ENCODE measurements at regions of chr17 and their contacts with region 1.

Region 1: DNA sequence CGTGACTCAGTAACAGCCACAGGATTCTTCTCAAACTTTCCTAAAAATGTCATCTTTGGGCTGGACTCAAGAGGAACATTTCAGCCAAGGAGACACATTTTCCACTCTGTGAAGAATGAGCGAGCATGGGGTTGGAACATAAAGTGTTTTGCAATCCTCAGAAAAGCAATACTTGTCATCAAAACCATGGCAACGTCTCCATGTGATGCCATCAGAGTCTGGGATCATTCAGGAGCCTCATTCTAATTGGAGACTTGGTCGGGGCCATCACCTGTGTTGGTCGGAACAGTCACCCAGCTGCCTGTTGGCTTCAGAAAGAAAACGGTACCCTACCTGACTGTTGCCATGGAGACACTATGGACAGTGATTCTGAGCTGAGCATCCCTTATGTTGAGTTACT is 25.5 kb downstream of the MYOCD start:
- DNase-seq: no peak
- H3K4me3 ChIP-seq: no peak overlapping the region
- H3K27ac ChIP-seq: peak overlapping the region in 1 of 2 donors; percentile 66
- H3K4me1 ChIP-seq: no peaks in the 10 kb centered on the region
- H3K27me3 ChIP-seq: no peaks in the 10 kb centered on the region
- CTCF ChIP-seq: no peak
- POLR2A ChIP-seq: no peak

Region 2: GRCh38 chr17:12463102-12463501 is 228.1 kb before region 1 on chr17:
- intact Hi-C with region 1: loop called (anchors 5 kb)
- DNase-seq: no peak
- H3K4me3 ChIP-seq: no peak overlapping the region
- H3K27ac ChIP-seq: no peak overlapping the region
- H3K4me1 ChIP-seq: no peaks in the 10 kb centered on the region
- H3K27me3 ChIP-seq: no peaks in the 10 kb centered on the region
- CTCF ChIP-seq: no peak
- POLR2A ChIP-seq: no peak

Region 3: DNA sequence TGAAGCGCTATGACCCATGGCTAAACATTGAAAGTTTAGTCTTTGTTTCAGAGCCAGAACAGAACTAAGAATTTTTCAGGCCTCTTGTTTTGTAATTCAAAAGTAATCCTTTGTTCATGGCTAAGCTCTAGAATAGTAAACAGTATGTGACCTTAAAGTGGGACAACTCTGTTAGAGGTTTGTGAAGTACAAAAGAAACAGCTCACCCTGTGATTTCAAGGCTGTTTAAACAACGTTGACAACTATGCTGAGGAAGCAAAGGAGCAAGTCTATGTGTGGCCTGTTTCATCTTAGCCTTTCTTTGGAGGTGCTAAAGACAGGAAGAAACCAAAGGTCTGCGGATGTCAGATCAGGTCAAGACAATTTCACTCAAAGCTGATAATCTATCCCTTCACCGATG is 14.9 kb after region 1 on chr17:
- intact Hi-C with region 1: loop called (anchors 1 kb)
- DNase-seq: no peak
- H3K4me3 ChIP-seq: no peak overlapping the region
- H3K27ac ChIP-seq: no peak overlapping the region
- H3K4me1 ChIP-seq: no peaks in the 10 kb centered on the region
- H3K27me3 ChIP-seq: no peaks in the 10 kb centered on the region
- CTCF ChIP-seq: no peak
- POLR2A ChIP-seq: no peak